ENCODE measurements at regions of chr1 and their contacts with region 1.

Region 1: DNA sequence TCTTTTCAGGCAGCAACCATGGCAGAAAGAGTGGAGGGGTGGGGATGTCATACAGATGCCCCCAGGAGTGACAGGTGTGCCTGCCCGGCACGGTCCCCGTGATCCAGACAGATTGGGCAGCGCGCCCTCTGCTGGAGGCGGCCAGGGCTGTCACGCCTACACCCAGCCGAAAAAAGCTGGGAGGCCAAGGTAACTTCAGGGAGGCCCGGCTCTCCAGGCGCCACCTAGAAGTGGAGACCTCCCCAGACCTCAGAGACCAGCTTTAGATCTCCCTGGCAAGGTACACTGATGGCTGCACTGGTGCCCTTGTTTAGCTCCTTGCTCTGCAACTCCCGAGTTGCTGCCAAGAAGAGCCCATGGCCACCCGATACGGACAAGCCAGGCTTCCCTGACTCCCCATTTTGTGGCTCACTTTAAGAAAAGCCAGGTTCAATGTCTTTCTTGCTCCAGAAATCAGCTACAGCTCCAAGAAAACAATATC is 6.6 kb downstream of the GOLT1A start:
- DNase-seq: no peak
- ATAC-seq: peak; percentile 98
- H3K4me3 ChIP-seq: no peak overlapping the region
- H3K27ac ChIP-seq: no peak overlapping the region
- H3K4me1 ChIP-seq: no peaks in the 10 kb centered on the region
- H3K27me3 ChIP-seq: peaks cover 0 to 8% of the 10 kb centered on the region in 2 experiments; a peak in 2 of 4 replicates
- CTCF ChIP-seq: peak; percentile 79 to 94 (median 90)
- EP300 ChIP-seq: no peak
- POLR2A ChIP-seq: no peak
- RAD21 ChIP-seq: peak; percentile 52

Region 2: DNA sequence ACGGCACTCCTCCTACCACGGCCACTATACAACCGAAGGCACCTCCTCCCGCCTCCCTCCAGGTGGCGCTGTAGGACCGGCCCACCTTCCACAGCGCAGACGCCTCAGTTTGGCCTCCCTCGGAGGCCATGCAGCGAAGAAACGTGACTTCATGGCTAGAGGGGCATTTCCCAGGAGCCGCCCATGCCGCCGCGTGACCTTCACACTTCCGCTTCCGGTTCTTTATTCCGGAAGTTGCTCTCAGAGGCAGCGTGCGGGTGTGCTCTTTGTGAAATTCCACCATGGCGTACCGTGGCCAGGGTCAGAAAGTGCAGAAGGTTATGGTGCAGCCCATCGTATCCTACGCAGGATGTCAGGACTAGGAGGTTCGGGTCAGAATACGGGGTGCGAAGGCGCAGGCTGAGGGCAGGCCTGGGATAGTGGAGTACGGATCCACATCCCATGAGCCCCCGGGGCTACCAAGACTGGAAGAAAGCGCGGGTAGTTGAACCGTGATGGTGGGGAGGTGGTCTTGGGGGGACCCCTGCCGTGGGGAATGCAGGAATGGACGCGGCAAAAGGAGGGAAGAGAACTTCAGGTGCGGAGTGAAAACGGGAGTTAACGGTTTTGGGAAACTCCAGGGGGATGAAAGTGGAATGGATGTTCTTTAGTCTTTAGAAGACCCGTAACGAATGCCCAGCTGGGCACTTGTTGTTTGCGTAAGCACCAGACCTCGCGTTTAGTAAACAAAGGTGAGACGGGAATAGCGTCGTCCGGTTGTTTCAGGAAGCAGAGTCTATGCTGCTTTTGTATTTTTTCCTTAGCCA is 345.6 kb before region 1 on chr1 and contains the start of gene SNRPE:
- CTCF ChIA-PET with region 1: interaction called, 9 read pairs
- POLR2A ChIA-PET with region 1: no interaction called
- RAD21 ChIA-PET with region 1: no interaction called
- SMC1A ChIA-PET with region 1: no interaction called
- in situ Hi-C with region 1: no loop called
- intact Hi-C with region 1: loop called (anchors 1 kb)
- DNase-seq: peak; percentile 92
- ATAC-seq: peak; percentile 97
- H3K4me3 ChIP-seq: peak within 1 kb of the TSS; percentile 80
- H3K27ac ChIP-seq: peak within 1 kb of the TSS; percentile 94
- H3K4me1 ChIP-seq: peaks cover 4% of the 10 kb centered on the region; the same call in 1 of the 2 replicates
- H3K27me3 ChIP-seq: no peaks in the 10 kb centered on the region
- CTCF ChIP-seq: peak; percentile 94 to 96 (median 94)
- EP300 ChIP-seq: no peak
- POLR2A ChIP-seq: peak; percentile 97
- RAD21 ChIP-seq: peak; percentile 89
- polyA plus RNA-seq, gene SNRPE: 1,331 to 1,384 TPM

Region 3: DNA sequence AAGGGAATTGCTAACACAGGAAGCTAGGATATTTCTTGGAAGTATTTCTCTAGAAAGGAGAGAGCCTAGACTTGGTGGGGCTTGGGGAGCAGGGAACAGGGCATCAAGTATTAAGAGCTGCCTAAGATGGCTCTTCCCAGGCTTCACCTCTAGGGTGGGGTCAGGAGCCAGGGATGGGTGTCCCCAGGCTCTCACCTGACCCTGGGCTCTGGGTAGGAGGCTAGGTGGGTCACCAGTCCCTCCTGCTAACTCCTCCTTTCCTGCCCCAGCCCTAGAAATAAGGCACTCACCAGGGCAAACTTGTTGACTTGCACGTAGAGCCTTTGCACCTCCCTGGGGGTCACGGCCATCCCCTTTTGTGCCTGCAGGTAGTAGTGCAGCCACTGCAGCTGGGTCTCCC is 70.4 kb before region 1 on chr1:
- CTCF ChIA-PET with region 1: interaction called, 12 read pairs
- POLR2A ChIA-PET with region 1: no interaction called
- RAD21 ChIA-PET with region 1: no interaction called
- SMC1A ChIA-PET with region 1: no interaction called
- in situ Hi-C with region 1: no loop called
- intact Hi-C with region 1: no loop called
- DNase-seq: no peak
- ATAC-seq: no peak
- H3K4me3 ChIP-seq: no peak overlapping the region
- H3K27ac ChIP-seq: no peak overlapping the region
- H3K4me1 ChIP-seq: no peaks in the 10 kb centered on the region
- H3K27me3 ChIP-seq: peaks cover 0 to 3% of the 10 kb centered on the region in 2 experiments; a peak in 3 of 4 replicates
- CTCF ChIP-seq: no peak
- EP300 ChIP-seq: no peak
- POLR2A ChIP-seq: no peak
- RAD21 ChIP-seq: no peak

Region 4: DNA sequence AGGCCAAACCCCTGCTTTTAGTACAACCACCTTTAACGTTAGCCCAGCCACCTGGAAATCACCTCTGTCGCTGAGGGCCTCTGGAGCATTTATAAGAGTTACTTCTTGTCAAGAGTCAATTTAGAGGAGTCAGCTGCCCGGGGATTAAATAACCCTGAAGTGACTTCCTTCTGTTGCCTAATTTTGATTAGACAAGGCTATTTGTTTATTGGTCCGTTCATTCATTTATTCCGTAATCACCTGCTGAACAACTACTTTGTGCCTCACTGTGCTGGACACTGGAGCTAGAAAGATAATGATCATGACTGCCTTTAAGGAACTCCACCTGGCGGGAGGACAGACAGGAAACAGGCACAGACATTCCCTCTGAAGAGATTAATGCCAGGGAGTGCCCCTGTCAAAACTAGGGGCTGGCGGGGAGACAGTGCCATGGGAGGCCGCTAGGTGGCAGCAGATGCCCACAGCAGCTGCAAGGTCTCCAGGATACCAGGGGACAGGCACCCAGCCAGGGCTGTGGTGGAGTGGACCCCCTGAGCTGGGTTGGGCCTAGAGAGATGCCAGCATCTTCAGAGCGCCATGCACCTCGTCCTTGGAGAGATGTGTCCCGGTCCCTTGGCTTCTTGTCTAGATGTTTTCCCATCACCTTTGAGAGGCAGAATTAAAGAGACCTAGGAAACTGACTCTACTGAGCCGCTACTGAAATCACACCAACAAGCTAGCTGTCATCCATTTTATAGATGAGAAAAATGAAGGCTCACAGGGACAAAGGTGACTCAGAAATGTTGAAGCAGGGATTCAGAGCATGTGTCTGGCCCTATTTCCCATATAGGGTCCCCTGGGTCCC is 44.7 kb before region 1 on chr1:
- CTCF ChIA-PET with region 1: interaction called, 74 read pairs
- POLR2A ChIA-PET with region 1: no interaction called
- RAD21 ChIA-PET with region 1: interaction called, 15 read pairs
- SMC1A ChIA-PET with region 1: interaction called, 27 read pairs
- in situ Hi-C with region 1: loop called (anchors 5 kb)
- intact Hi-C with region 1: loop called (anchors 1 kb)
- DNase-seq: no peak
- ATAC-seq: peak; percentile 99
- H3K4me3 ChIP-seq: no peak overlapping the region
- H3K27ac ChIP-seq: no peak overlapping the region
- H3K4me1 ChIP-seq: no peaks in the 10 kb centered on the region
- H3K27me3 ChIP-seq: no peaks in the 10 kb centered on the region; a peak in 1 of 4 replicates
- CTCF ChIP-seq: peak; percentile 94 to 99 (median 99)
- EP300 ChIP-seq: no peak
- POLR2A ChIP-seq: no peak
- RAD21 ChIP-seq: peak; percentile 84

Region 5: DNA sequence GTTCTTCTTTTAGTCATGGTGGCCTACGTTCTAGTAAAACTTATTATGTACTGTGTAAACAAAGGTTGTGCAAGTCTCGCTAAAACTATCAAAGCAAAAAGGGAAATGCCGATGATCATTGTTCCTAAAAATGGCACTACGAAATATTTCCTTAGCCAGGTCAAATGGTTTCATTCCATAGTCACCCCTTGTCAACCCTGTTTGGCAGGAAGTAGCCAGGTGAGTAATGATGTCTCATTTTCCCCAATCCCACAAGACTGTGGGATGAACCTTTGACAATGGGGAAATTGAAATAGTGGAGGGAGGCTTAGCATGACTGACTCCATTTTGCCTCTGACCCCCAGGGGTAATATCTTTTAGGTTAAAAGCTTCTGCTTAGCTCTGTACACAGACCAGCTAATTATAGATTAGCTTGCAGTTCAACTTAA is 35.4 kb before region 1 on chr1:
- CTCF ChIA-PET with region 1: interaction called, 74 read pairs
- POLR2A ChIA-PET with region 1: no interaction called
- RAD21 ChIA-PET with region 1: no interaction called
- SMC1A ChIA-PET with region 1: interaction called, 3 read pairs
- in situ Hi-C with region 1: loop called (anchors 5 kb)
- intact Hi-C with region 1: no loop called
- DNase-seq: no peak
- ATAC-seq: no peak
- H3K4me3 ChIP-seq: no peak overlapping the region
- H3K27ac ChIP-seq: no peak overlapping the region
- H3K4me1 ChIP-seq: no peaks in the 10 kb centered on the region
- H3K27me3 ChIP-seq: peaks cover 0 to 2% of the 10 kb centered on the region in 2 experiments; a peak in 1 of 4 replicates
- CTCF ChIP-seq: no peak
- EP300 ChIP-seq: no peak
- POLR2A ChIP-seq: no peak
- RAD21 ChIP-seq: no peak

Region 6: GRCh38 chr1:204190212-204191211 is 16.7 kb before region 1 on chr1:
- CTCF ChIA-PET with region 1: interaction called, 25 read pairs
- POLR2A ChIA-PET with region 1: no interaction called
- RAD21 ChIA-PET with region 1: no interaction called
- SMC1A ChIA-PET with region 1: interaction called, 4 read pairs
- in situ Hi-C with region 1: no loop called
- intact Hi-C with region 1: no loop called
- DNase-seq: no peak
- ATAC-seq: no peak
- H3K4me3 ChIP-seq: no peak overlapping the region
- H3K27ac ChIP-seq: no peak overlapping the region
- H3K4me1 ChIP-seq: no peaks in the 10 kb centered on the region
- H3K27me3 ChIP-seq: peaks cover 3 to 16% of the 10 kb centered on the region in 2 experiments; a peak in 2 of 4 replicates
- CTCF ChIP-seq: no peak
- EP300 ChIP-seq: no peak
- POLR2A ChIP-seq: no peak
- RAD21 ChIP-seq: no peak